ENCODE measurements at regions of chrX and their contacts with region 1.

Region 1: GRCh38 chrX:19739683-19740082 is 147.7 kb downstream of the SH3KBP1 start:
- DNase-seq: peak; percentile 82
- H3K4me3 Mint-ChIP-seq: no peak overlapping the region
- H3K27ac Mint-ChIP-seq: no peak overlapping the region
- H3K4me1 Mint-ChIP-seq: no peaks in the 10 kb centered on the region
- H3K27me3 Mint-ChIP-seq: peaks cover 65% of the 10 kb centered on the region
- CTCF ChIP-seq: peak; percentile 52

Region 2: GRCh38 chrX:19593690-19594089 is 146.0 kb before region 1 on chrX:
- CTCF ChIA-PET with region 1: interaction called, 4 read pairs
- POLR2A ChIA-PET with region 1: no interaction called
- intact Hi-C with region 1: loop called (anchors 1 kb)
- DNase-seq: peak; percentile 64
- H3K4me3 Mint-ChIP-seq: no peak overlapping the region
- H3K27ac Mint-ChIP-seq: no peak overlapping the region
- H3K4me1 Mint-ChIP-seq: no peaks in the 10 kb centered on the region
- H3K27me3 Mint-ChIP-seq: peaks cover 31% of the 10 kb centered on the region
- CTCF ChIP-seq: peak; percentile 57

Region 3: GRCh38 chrX:19728915-19729314 is 10.8 kb before region 1 on chrX:
- CTCF ChIA-PET with region 1: interaction called, 36 read pairs
- POLR2A ChIA-PET with region 1: no interaction called
- intact Hi-C with region 1: no loop called
- DNase-seq: no peak
- H3K4me3 Mint-ChIP-seq: no peak overlapping the region
- H3K27ac Mint-ChIP-seq: no peak overlapping the region
- H3K4me1 Mint-ChIP-seq: peaks cover 6% of the 10 kb centered on the region
- H3K27me3 Mint-ChIP-seq: peaks cover 43% of the 10 kb centered on the region
- CTCF ChIP-seq: no peak

Region 4: GRCh38 chrX:19990556-19991349 is 251.1 kb after region 1 on chrX and contains the start of gene BCLAF3:
- CTCF ChIA-PET with region 1: interaction called, 3 read pairs
- POLR2A ChIA-PET with region 1: no interaction called
- intact Hi-C with region 1: loop called (anchors 1 kb)
- DNase-seq: peak; percentile 80
- H3K4me3 Mint-ChIP-seq: peak within 1 kb of the TSS; percentile 69
- H3K27ac Mint-ChIP-seq: peak within 1 kb of the TSS; percentile 1
- H3K4me1 Mint-ChIP-seq: peaks cover 7% of the 10 kb centered on the region
- H3K27me3 Mint-ChIP-seq: peaks cover 22% of the 10 kb centered on the region
- CTCF ChIP-seq: peak; percentile 70
- total RNA-seq, gene BCLAF3: 8.6 and 9.6 TPM in 2 replicates

Region 5: DNA sequence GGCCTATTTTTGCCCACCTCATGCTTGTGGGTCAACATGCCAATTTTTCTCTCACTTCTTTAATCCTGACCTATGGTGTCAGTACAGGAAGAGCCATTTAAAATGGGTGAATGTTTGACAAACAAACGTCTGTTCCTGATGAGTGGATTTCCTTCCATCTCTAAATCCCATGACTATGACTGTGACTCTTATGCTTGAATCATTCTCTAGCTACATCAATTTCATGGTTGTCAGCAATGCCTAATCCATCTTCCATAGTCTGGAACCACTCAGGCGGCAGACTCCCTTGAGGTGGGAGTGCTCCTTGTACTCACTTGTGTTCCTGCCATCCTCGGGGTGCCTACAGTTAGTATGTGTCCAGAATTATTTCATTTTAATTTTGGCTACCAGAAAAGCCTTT is 721.9 kb after region 1 on chrX:
- CTCF ChIA-PET with region 1: no interaction called
- POLR2A ChIA-PET with region 1: no interaction called
- intact Hi-C with region 1: no loop called
- DNase-seq: no peak
- H3K4me3 Mint-ChIP-seq: no peak overlapping the region
- H3K27ac Mint-ChIP-seq: no peak overlapping the region
- H3K4me1 Mint-ChIP-seq: no peaks in the 10 kb centered on the region
- H3K27me3 Mint-ChIP-seq: peaks cover 82% of the 10 kb centered on the region
- CTCF ChIP-seq: no peak

Measured in MCF 10A (cell line).